Activated B cell treated with CpG ODN at 0.5 μM for 24 hours (primary cell): ENCODE measurements at regions of chr19 and their contacts with region 1.

Region 1: GRCh38 chr19:47225746-47226425 is 5.1 kb downstream of the BBC3 start:
- DNase-seq: peak; percentile 94
- ATAC-seq: peak; percentile 61
- H3K4me3 Mint-ChIP-seq: peak overlapping the region; percentile 85
- H3K27ac Mint-ChIP-seq: peak overlapping the region; percentile 89
- H3K4me1 Mint-ChIP-seq: peaks cover 16% of the 10 kb centered on the region
- H3K27me3 Mint-ChIP-seq: no peaks in the 10 kb centered on the region
- CTCF ChIP-seq: no peak

Region 2: GRCh38 chr19:46860125-46860845 is 365.6 kb before region 1 on chr19:
- CTCF ChIA-PET with region 1: no interaction called
- POLR2A ChIA-PET with region 1: no interaction called
- intact Hi-C with region 1: loop called (anchors 2 kb)
- DNase-seq: peak; percentile 87
- ATAC-seq: peak; percentile 79
- H3K4me3 Mint-ChIP-seq: peak overlapping the region; percentile 92
- H3K27ac Mint-ChIP-seq: peak overlapping the region; percentile 92
- H3K4me1 Mint-ChIP-seq: peaks cover 26% of the 10 kb centered on the region
- H3K27me3 Mint-ChIP-seq: no peaks in the 10 kb centered on the region
- CTCF ChIP-seq: no peak

Region 3: GRCh38 chr19:47035127-47036096 is 190.5 kb before region 1 on chr19:
- CTCF ChIA-PET with region 1: no interaction called
- POLR2A ChIA-PET with region 1: no interaction called
- intact Hi-C with region 1: no loop called
- DNase-seq: peak; percentile 99
- ATAC-seq: peak; percentile 98
- H3K4me3 Mint-ChIP-seq: peak overlapping the region; percentile 95
- H3K27ac Mint-ChIP-seq: peak overlapping the region; percentile 80
- H3K4me1 Mint-ChIP-seq: peaks cover 17% of the 10 kb centered on the region
- H3K27me3 Mint-ChIP-seq: peaks cover 9% of the 10 kb centered on the region
- CTCF ChIP-seq: peak; percentile 87

Region 4: GRCh38 chr19:47130591-47131227 is 95.2 kb before region 1 on chr19 and contains the start of gene SAE1:
- CTCF ChIA-PET with region 1: interaction called, 3 read pairs
- POLR2A ChIA-PET with region 1: interaction called, 12 read pairs
- intact Hi-C with region 1: no loop called
- DNase-seq: peak; percentile 94
- ATAC-seq: peak; percentile 89
- H3K4me3 Mint-ChIP-seq: peak within 1 kb of the TSS; percentile 99
- H3K27ac Mint-ChIP-seq: peak within 1 kb of the TSS; percentile 94
- H3K4me1 Mint-ChIP-seq: peaks cover 44% of the 10 kb centered on the region
- H3K27me3 Mint-ChIP-seq: no peaks in the 10 kb centered on the region
- CTCF ChIP-seq: no peak
- total RNA-seq, gene SAE1: 64.5 and 67.4 TPM in 2 replicates

Region 5: DNA sequence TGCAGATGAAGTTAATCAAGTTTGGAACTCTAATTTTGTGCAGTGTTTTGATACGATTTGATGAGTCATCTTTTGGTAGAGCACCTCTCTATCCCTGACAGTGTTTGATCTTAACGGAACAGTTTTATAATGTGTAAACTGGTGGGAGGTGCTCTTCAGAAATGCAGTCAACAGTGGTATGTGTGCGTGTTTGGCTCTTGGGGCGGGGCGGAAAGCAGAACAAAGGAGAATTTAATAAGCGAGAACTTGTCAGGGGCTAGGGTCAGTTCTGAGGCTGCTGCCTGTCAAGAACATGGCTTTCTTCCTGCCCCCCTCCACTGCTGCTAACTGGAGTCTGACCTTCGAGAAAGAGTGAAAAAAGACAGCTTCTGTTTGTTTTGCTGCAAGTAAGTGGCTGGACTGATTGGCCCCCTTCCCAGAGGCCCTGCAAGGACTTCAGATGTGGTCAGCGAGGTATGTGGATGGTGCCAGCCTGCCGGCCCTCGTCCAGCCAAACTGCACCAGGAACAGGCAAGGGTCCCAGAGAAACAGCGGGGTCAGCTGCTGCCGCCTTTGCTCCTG is 35.6 kb before region 1 on chr19:
- CTCF ChIA-PET with region 1: no interaction called
- POLR2A ChIA-PET with region 1: interaction called, 12 read pairs
- intact Hi-C with region 1: no loop called
- DNase-seq: no peak
- ATAC-seq: no peak
- H3K4me3 Mint-ChIP-seq: no peak overlapping the region
- H3K27ac Mint-ChIP-seq: no peak overlapping the region
- H3K4me1 Mint-ChIP-seq: peaks cover 20% of the 10 kb centered on the region
- H3K27me3 Mint-ChIP-seq: no peaks in the 10 kb centered on the region
- CTCF ChIP-seq: no peak

Region 6: GRCh38 chr19:47210689-47211316 is 15.1 kb before region 1 on chr19:
- CTCF ChIA-PET with region 1: interaction called, 45 read pairs
- POLR2A ChIA-PET with region 1: interaction called, 128 read pairs
- intact Hi-C with region 1: loop called (anchors 1 kb)
- DNase-seq: peak; percentile 53
- ATAC-seq: peak; percentile 94
- H3K4me3 Mint-ChIP-seq: no peak overlapping the region
- H3K27ac Mint-ChIP-seq: peak overlapping the region; percentile 87
- H3K4me1 Mint-ChIP-seq: peaks cover 9% of the 10 kb centered on the region
- H3K27me3 Mint-ChIP-seq: no peaks in the 10 kb centered on the region
- CTCF ChIP-seq: peak; percentile 83

Region 7: DNA sequence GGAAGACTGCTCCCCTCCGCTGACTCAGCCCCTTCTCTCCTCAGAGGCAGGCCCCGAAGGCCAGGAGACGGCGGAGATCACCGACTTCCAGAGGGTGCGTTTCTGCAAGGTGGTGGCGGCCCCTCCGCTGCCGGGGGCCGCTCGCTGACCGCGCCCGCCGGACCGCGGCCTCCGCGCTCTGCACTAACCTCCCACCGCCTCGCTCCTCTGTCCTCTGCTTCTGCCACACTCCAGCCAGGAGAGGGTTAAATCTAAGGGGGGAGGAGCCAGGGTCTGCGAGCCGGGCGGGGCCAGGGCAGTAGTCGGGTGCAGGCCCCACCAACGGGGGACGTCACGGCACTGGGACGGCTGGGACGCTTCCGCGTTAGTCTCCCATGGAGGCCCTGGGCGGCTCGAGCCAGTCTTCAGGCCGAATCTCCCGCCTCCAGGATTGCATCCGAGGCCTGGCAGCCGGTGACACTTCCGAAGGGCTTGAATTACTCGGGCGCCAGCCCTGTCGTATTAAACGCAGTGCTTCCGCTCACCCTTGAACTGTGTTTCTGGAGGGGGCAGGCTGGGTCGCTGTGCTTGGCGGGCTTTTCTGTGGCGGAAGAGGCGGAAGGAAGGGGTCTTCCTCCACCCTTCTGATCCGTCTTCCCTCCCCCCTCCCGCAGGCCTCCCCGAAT is 47.6 kb after region 1 on chr19:
- CTCF ChIA-PET with region 1: no interaction called
- POLR2A ChIA-PET with region 1: interaction called, 42 read pairs
- intact Hi-C with region 1: loop called (anchors 1 kb)
- DNase-seq: peak; percentile 83
- ATAC-seq: peak; percentile 54
- H3K4me3 Mint-ChIP-seq: peak overlapping the region; percentile 96
- H3K27ac Mint-ChIP-seq: peak overlapping the region; percentile 97
- H3K4me1 Mint-ChIP-seq: peaks cover 27% of the 10 kb centered on the region
- H3K27me3 Mint-ChIP-seq: no peaks in the 10 kb centered on the region
- CTCF ChIP-seq: no peak

Region 8: GRCh38 chr19:47483800-47484690 is 258.2 kb after region 1 on chr19 and contains the start of gene KPTN:
- CTCF ChIA-PET with region 1: no interaction called
- POLR2A ChIA-PET with region 1: interaction called, 11 read pairs
- intact Hi-C with region 1: no loop called
- DNase-seq: peak; percentile 85
- ATAC-seq: peak; percentile 87
- H3K4me3 Mint-ChIP-seq: peak within 1 kb of the TSS; percentile 98
- H3K27ac Mint-ChIP-seq: peak within 1 kb of the TSS; percentile 99
- H3K4me1 Mint-ChIP-seq: peaks cover 42% of the 10 kb centered on the region
- H3K27me3 Mint-ChIP-seq: no peaks in the 10 kb centered on the region
- CTCF ChIP-seq: no peak
- total RNA-seq, gene KPTN: 8.0 and 8.7 TPM in 2 replicates